ENCODE measurements at regions of chr2 and their contacts with region 1.

Region 1: DNA sequence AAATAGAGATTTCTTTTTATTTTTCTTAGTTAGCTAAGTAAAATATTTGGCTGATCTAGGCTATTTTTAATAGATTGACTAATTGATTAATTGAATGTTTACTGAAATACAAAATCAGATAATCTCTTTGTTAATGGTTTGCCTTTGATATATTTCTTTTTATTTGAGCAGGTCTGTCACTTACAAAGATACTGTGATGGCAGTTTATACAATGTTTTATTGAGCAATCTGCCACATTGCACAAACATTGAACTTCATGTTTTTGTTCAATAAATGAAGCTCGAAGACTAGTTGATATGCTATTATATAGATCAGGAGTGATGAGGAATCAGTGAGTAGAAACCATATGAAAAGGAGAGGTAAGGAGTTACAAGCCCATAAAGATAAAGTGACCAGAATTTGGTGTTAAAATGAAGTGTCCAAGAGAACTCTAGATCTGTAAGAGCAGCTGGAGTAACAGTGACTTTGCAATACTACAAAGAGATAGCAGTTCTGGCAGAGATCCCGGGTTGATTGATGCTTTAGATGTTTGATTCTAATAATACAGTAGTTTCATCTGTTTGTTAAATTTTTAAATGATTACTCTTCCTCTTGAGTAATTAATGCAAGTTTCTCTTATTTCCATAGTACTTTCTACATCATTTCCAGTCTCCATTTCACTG is 574.2 kb downstream of the CCDC85A start:
- DNase-seq: no peak
- ATAC-seq: no peak
- H3K4me3 ChIP-seq: no peak overlapping the region
- H3K27ac ChIP-seq: no peak overlapping the region
- H3K4me1 ChIP-seq: peaks cover 0 to 6% (median 0%) of the 10 kb centered on the region in 12 donors
- H3K27me3 ChIP-seq: no peaks in the 10 kb centered on the region
- CTCF ChIP-seq: no peak
- POLR2A ChIP-seq: no peak

Region 2: DNA sequence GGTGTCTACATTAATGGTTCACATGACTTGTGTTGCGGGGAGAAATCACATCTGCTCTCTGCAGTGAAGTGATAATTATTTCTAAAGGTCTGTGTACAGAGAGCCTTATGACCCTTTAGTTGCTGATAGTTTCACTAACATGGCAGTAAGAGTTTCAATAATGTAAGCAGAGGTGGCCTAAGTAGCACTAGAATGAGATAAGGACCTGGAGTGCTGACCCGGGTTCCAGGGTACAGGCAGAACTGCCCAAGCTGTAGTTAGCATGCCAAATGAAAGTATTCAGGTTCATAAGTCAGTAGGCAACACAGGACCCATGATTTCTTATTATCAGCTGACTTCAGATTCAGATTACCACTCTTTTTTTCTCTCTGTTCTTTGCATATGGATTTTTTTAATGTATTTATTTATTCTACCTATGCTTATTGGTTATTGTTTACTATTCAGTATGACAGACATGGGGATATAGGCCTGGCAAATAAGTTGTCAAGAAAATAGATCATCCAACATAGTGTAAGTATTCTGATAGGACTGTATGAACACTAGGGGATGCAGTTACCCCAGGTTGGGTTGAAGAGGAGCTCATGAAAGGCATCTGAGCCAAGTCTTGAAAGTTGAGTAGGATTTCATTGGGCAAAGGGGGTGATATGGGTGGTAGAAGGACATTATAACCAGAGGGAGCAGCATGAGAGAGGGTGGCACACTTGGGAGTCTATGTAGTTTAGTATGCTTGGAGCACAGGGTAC is 469.0 kb before region 1 on chr2:
- intact Hi-C with region 1: loop called in 3 of 10 experiments (anchors 10 kb)
- DNase-seq: no peak
- ATAC-seq: peak in 2 of 4 donors; percentile 34 to 36
- H3K4me3 ChIP-seq: no peak overlapping the region
- H3K27ac ChIP-seq: no peak overlapping the region
- H3K4me1 ChIP-seq: peaks cover 0 to 29% (median 7%) of the 10 kb centered on the region in 12 donors
- H3K27me3 ChIP-seq: no peaks in the 10 kb centered on the region
- CTCF ChIP-seq: peak in 8 of 12 donors; percentile 17 to 49 (median 26)
- POLR2A ChIP-seq: no peak

Region 3: GRCh38 chr2:56474412-56475158 is 283.4 kb before region 1 on chr2:
- intact Hi-C with region 1: loop called in 1 of 10 experiments (anchors 10 kb)
- DNase-seq: peak in 1 of 5 donors; percentile 19
- ATAC-seq: peak; percentile 88 to 95 (median 93)
- H3K4me3 ChIP-seq: no peak overlapping the region
- H3K27ac ChIP-seq: peak overlapping the region in 3 of 12 donors; percentile 6 to 55 (median 10)
- H3K4me1 ChIP-seq: peaks cover 0 to 19% (median 0%) of the 10 kb centered on the region in 12 donors
- H3K27me3 ChIP-seq: no peaks in the 10 kb centered on the region
- CTCF ChIP-seq: no peak
- POLR2A ChIP-seq: no peak

Region 4: GRCh38 chr2:56587456-56587855 is 170.6 kb before region 1 on chr2:
- intact Hi-C with region 1: loop called in 1 of 10 experiments (anchors 5 kb)
- DNase-seq: no peak
- ATAC-seq: no peak
- H3K4me3 ChIP-seq: no peak overlapping the region
- H3K27ac ChIP-seq: no peak overlapping the region
- H3K4me1 ChIP-seq: peaks cover 0 to 14% (median 0%) of the 10 kb centered on the region in 12 donors
- H3K27me3 ChIP-seq: no peaks in the 10 kb centered on the region
- CTCF ChIP-seq: no peak
- POLR2A ChIP-seq: no peak

Measured in heart left ventricle (tissue), 16 donors.